Ascending aorta (tissue), 2 donors: ENCODE measurements at regions of chr5 and their contacts with region 1.

Region 1: DNA sequence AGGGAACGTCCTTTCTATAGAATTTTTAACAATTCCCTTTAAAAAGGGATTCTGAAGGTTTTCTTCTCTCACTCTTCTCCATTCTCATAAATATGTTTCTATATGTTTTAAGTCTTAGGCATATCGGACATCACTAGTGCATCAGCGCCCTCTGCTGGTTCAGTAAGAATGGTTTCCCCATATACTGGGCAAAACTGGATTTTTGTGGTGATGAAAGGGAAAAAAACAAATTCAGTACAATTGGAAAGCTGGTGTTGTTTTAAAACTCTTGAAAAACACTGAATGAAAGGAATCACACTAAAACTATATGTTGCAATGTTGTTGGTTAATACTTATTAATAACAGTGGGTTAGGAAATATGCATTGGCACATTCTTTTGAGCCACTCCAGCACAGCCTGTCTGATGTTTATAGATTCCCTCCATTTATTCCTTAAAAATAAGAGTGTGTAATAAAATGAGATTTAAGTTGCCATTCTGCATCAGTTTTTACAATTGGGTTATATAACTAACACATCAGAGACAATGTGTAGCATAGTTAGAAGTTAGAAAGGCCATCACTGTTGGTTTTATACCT is 15.8 kb downstream of the CWC27 start:
- DNase-seq: peak in 1 of 2 donors; percentile 77
- H3K4me3 ChIP-seq: no peak overlapping the region
- H3K27ac ChIP-seq: no peak overlapping the region
- H3K4me1 ChIP-seq: no peaks in the 10 kb centered on the region
- H3K27me3 ChIP-seq: no peaks in the 10 kb centered on the region
- CTCF ChIP-seq: peak; percentile 59 to 83 (median 70)

Region 2: GRCh38 chr5:64190562-64191306 is 593.8 kb before region 1 on chr5:
- intact Hi-C with region 1: no loop called
- DNase-seq: no peak
- H3K4me3 ChIP-seq: no peak overlapping the region
- H3K27ac ChIP-seq: no peak overlapping the region
- H3K4me1 ChIP-seq: peaks cover 0 to 17% of the 10 kb centered on the region in 2 donors
- H3K27me3 ChIP-seq: no peaks in the 10 kb centered on the region
- CTCF ChIP-seq: no peak

Region 3: DNA sequence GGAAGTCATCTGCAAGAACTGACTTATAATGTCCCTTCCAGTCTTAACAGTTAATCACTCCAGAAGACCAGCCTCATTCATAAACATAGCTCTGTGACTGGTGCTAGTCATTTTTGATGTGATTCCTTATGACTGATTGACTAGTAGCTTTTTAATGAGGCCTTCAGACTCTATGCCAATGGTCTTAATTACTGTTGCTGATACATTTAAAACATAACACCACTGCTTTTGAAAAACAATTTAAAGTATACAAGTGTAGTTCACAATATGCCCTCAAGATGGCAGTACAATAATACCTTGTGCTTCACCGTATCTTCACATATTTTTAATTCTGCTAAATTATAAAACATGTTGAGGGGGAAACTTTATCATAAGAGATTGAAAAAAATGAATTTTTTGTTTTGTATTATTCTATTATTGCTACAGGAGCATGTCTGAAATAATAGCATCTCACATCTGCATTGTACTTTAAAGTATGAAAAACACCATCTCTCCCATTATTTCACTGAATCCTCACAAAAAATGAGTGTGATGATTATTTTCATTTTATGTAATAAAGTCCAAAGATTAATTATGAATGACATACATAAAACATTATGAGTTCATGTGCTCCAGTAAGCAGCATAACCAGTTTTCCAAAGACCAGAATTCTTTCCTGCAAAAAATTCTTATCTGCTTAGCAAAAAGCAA is 149.4 kb before region 1 on chr5:
- intact Hi-C with region 1: loop called (anchors 1 kb)
- DNase-seq: no peak
- H3K4me3 ChIP-seq: no peak overlapping the region
- H3K27ac ChIP-seq: no peak overlapping the region
- H3K4me1 ChIP-seq: no peaks in the 10 kb centered on the region
- H3K27me3 ChIP-seq: no peaks in the 10 kb centered on the region
- CTCF ChIP-seq: peak; percentile 40 to 84 (median 70)

Region 4: DNA sequence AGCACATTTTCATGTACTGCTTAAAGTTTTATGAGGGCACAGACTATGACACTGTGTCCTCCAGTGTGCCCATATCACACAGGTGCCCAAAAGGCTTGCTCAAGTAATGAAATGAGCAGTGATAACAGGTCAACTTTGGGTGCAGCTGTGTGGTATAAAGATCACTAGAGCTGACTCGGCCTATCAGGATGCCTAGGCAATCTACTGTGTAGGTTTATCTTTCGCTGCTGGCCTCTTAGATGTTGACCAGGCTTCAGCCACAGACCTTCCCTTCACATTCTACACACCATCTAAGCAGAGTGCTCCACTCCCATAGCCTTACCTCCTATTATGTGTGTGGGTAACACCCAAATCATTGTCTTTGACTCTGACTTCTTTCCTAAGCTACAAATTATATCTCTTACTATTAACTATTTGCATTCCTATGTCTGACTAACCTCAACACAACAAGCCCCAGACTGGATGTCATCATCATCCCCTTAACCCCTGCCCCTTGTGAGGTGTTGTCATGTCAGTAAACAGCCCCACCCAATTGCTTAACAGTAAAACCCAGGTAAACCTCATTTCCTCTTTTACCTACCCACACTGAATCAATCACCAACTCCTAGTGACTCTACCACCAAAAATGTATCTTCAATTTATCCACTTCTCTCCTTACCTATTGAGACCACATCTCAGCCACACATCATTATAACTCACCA is 18.6 kb before region 1 on chr5:
- intact Hi-C with region 1: no loop called
- DNase-seq: no peak
- H3K4me3 ChIP-seq: peak overlapping the region in 1 of 2 donors; percentile 20
- H3K27ac ChIP-seq: no peak overlapping the region
- H3K4me1 ChIP-seq: peaks cover 7 to 27% of the 10 kb centered on the region in 2 donors
- H3K27me3 ChIP-seq: no peaks in the 10 kb centered on the region
- CTCF ChIP-seq: no peak